ENCODE measurements at regions of chr1 and their contacts with region 1.

Region 1: DNA sequence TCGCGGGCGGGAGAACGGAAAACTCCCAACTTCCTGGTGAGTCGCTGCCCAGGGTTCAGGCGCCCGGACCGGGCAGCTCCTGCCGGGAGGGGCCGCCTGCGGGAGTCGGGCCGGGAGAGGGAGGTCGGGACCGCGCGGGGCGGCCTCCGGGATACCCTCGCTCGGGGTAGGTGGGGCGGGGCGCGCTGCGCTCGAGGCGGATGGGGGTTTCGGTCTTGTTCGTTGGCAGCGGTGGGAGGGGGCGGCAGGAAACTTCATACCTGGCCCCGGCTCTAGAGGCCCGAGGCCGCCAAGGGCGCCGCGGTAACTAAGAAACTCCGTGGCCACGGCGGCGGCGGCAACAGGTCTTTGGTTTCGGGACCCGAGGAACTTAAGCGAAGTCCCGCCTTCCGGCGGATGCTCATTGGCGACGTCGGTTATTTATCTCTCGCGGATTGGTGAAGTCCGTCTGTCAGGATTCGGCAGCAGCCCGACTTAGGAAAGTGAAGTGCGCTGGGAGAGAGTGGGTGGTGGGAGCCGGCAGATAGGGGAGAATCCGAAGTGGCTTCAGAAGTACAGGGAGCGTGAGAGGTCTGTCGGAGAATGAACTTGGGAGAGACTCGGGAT is 546 bp downstream of the NEK7 start:
- DNase-seq: peak; percentile 84 to 90
- H3K4me3 ChIP-seq: peak overlapping the region; percentile 94 to 100 (median 98)
- H3K27ac ChIP-seq: peak overlapping the region; percentile 99
- H3K4me1 ChIP-seq: peaks cover 0 to 6% of the 10 kb centered on the region in 2 donors
- H3K27me3 ChIP-seq: no peaks in the 10 kb centered on the region
- CTCF ChIP-seq: peak in 1 of 3 donors; percentile 6
- POLR2A ChIP-seq: peak; percentile 37

Region 2: DNA sequence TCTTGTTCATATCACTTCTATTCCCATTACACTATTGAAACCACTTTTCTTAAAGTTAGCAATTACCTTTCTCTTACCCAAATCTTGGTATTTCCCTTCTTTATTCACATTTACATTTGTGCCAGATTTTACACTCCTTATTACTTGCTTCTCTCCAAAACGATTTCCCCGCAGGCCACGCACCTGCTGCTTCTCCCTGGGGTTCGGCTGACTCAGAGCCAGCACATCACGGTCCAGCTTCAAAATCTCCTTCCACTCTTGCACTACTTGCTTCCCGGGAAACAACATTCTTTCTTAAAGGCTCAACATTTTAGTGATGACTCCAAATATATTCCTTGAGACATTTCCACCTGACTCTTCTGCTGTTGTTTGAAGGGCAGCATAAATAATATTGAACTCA is 219.5 kb before region 1 on chr1:
- intact Hi-C with region 1: no loop called
- DNase-seq: no peak
- H3K4me3 ChIP-seq: no peak overlapping the region
- H3K27ac ChIP-seq: no peak overlapping the region
- H3K4me1 ChIP-seq: no peaks in the 10 kb centered on the region
- H3K27me3 ChIP-seq: peaks cover 0 to 22% of the 10 kb centered on the region in 2 donors
- CTCF ChIP-seq: no peak
- POLR2A ChIP-seq: no peak

Region 3: DNA sequence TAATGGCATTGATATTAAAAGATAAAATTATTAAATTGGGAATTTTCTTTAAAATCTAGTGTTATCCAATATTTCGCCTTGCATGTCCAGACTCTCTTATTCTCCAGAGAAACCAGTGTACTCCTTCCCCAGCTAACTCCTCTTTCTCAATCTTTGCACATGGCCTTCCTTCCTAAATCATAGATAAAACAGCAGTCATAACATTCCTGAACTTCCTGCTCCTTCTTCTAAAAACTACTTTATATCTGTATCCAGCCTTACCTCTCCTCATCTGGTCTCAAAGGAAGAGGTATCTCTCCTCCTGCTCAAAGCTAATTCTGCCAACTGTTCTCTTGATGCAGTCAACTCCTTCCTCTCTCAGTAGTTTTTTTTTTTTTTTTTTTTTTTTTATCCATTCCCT is 40.1 kb before region 1 on chr1:
- intact Hi-C with region 1: loop called (anchors 2 kb)
- DNase-seq: no peak
- H3K4me3 ChIP-seq: no peak overlapping the region
- H3K27ac ChIP-seq: no peak overlapping the region
- H3K4me1 ChIP-seq: no peaks in the 10 kb centered on the region
- H3K27me3 ChIP-seq: no peaks in the 10 kb centered on the region
- CTCF ChIP-seq: no peak
- POLR2A ChIP-seq: no peak

Region 4: GRCh38 chr1:198212637-198213036 is 55.3 kb after region 1 on chr1:
- intact Hi-C with region 1: no loop called
- DNase-seq: no peak
- H3K4me3 ChIP-seq: no peak overlapping the region
- H3K27ac ChIP-seq: no peak overlapping the region
- H3K4me1 ChIP-seq: no peaks in the 10 kb centered on the region
- H3K27me3 ChIP-seq: no peaks in the 10 kb centered on the region
- CTCF ChIP-seq: no peak
- POLR2A ChIP-seq: no peak

Region 5: DNA sequence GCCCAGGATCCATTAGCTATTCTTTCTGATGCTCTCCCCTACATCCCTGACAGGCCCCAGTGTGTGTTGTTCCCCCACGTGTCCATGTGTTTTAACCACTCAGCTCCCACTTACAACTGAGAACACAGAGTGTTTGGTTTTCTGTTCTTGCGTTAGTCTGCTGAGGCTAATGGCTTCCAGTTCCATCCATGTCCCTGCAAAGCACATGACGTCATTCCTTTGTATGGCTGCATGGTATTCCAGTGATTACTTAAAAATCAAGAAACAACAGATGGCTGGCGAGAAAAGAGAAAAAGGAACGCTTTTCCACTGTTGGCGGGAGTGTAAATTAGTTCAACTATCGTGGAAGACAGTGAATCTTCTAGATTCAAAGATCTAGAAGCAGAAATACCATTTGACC is 1037.5 kb after region 1 on chr1:
- intact Hi-C with region 1: no loop called
- DNase-seq: no peak
- H3K4me3 ChIP-seq: no peak overlapping the region
- H3K27ac ChIP-seq: no peak overlapping the region
- H3K4me1 ChIP-seq: no peaks in the 10 kb centered on the region
- H3K27me3 ChIP-seq: no peaks in the 10 kb centered on the region
- CTCF ChIP-seq: no peak
- POLR2A ChIP-seq: no peak

Measured in breast epithelium (tissue), 4 donors.